ENCODE measurements at regions of chr7 and their contacts with region 1.

Region 1: GRCh38 chr7:155344600-155345433 is 47.1 kb downstream of the INSIG1 start:
- DNase-seq: peak; percentile 71
- H3K4me3 ChIP-seq: peak overlapping the region; percentile 60
- H3K27ac ChIP-seq: no peak overlapping the region
- H3K4me1 ChIP-seq: peaks cover 10% of the 10 kb centered on the region
- H3K27me3 ChIP-seq: peaks cover 62% of the 10 kb centered on the region
- CTCF ChIP-seq: peak; percentile 91

Region 2: GRCh38 chr7:154927624-154928143 is 417.1 kb before region 1 on chr7:
- intact Hi-C with region 1: loop called (anchors 10 kb)
- DNase-seq: peak; percentile 45
- H3K4me3 ChIP-seq: peak overlapping the region; percentile 72
- H3K27ac ChIP-seq: peak overlapping the region; percentile 85
- H3K4me1 ChIP-seq: peaks cover 18% of the 10 kb centered on the region
- H3K27me3 ChIP-seq: no peaks in the 10 kb centered on the region
- CTCF ChIP-seq: peak; percentile 76

Region 3: DNA sequence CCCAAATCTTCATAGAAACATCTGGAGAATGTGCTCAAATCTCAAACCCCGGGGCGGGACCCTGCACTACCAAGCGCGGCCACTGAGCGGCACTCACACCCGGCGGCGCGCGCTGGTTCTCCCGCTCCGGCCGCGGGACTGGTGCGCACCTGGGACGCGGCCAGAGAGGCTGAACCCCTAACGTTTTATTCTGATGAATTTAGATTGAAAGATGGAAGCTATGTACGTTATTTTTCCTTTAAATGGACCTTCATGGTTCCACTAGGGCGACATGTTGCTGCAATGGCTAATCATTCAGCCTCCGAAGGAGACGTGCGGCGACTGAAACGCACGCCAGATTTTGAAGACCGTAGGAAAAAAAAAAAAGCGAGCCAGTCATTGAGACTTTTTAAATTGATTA is 154.1 kb before region 1 on chr7:
- intact Hi-C with region 1: loop called (anchors 5 kb)
- DNase-seq: no peak
- H3K4me3 ChIP-seq: no peak overlapping the region
- H3K27ac ChIP-seq: no peak overlapping the region
- H3K4me1 ChIP-seq: no peaks in the 10 kb centered on the region
- H3K27me3 ChIP-seq: peaks cover 57% of the 10 kb centered on the region
- CTCF ChIP-seq: peak; percentile 86

Measured in left ventricle myocardium inferior (tissue), 1 donor.